Psoas muscle (tissue), 8 donors: ENCODE measurements at regions of chr4 and their contacts with region 1.

Region 1: GRCh38 chr4:40897557-40898203 is 147.9 kb downstream of the NSUN7 start:
- DNase-seq: peak; percentile 69 to 80
- ATAC-seq: peak; percentile 61 to 82 (median 76)
- H3K4me3 ChIP-seq: no peak overlapping the region
- H3K27ac ChIP-seq: no peak overlapping the region
- H3K4me1 ChIP-seq: peaks cover 7% of the 10 kb centered on the region
- H3K27me3 ChIP-seq: no peaks in the 10 kb centered on the region
- CTCF ChIP-seq: peak; percentile 74

Region 2: GRCh38 chr4:40736910-40737309 is 160.8 kb before region 1 on chr4:
- intact Hi-C with region 1: loop called in 1 of 2 experiments (anchors 5 kb)
- DNase-seq: no peak
- ATAC-seq: peak in 1 of 4 donors; percentile 49
- H3K4me3 ChIP-seq: no peak overlapping the region
- H3K27ac ChIP-seq: no peak overlapping the region
- H3K4me1 ChIP-seq: no peaks in the 10 kb centered on the region
- H3K27me3 ChIP-seq: no peaks in the 10 kb centered on the region
- CTCF ChIP-seq: peak; percentile 39